Aorta (tissue), 5 donors: ENCODE measurements at regions of chr15 and their contacts with region 1.

Region 1: GRCh38 chr15:76139368-76140073 is 79.7 kb downstream of the TMEM266 start:
- DNase-seq: peak; percentile 80 to 83
- ATAC-seq: peak; percentile 81
- H3K4me3 ChIP-seq: no peak overlapping the region
- H3K27ac ChIP-seq: no peak overlapping the region
- H3K4me1 ChIP-seq: no peaks in the 10 kb centered on the region
- H3K27me3 ChIP-seq: no peaks in the 10 kb centered on the region

Region 2: DNA sequence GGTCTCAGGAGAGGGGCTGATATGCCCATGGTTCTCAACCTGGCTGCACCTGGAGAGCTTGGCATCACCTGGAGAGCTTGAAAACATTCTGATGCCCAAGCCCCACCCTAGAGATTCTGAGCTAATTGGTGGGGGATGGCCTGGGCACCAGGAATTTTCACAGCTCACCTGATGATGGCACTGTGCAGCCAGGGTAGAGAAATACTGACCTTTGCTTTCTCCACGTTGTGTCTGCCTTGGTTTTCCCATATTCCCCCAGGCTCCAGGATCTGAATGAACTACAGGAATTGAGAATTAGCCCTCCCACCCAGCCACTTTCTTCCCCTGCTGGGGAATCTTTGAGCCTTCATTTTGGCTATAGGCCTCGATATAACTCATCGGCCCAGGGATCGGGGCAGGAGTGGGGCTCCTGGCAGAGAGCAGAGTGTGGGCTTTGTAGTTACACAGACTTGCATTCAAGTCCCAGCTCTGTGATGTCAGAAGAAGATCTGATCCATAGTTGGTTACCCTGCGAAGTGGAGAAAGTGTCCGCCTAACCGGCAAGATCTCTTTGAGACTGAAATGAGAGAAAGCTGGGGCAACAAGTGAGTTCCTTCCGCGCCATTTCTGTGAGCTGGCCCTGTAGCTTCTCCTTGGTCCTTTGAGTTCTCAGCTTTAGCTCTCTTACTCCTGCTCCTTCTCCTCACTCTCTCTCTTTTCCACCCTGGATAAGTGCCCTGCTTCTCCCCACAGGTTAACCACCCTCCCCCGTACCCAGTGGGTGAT is 329.4 kb before region 1 on chr15:
- intact Hi-C with region 1: loop called in 1 of 2 experiments (anchors 10 kb)
- DNase-seq: no peak
- ATAC-seq: no peak
- H3K4me3 ChIP-seq: no peak overlapping the region
- H3K27ac ChIP-seq: no peak overlapping the region
- H3K4me1 ChIP-seq: no peaks in the 10 kb centered on the region
- H3K27me3 ChIP-seq: no peaks in the 10 kb centered on the region

Region 3: DNA sequence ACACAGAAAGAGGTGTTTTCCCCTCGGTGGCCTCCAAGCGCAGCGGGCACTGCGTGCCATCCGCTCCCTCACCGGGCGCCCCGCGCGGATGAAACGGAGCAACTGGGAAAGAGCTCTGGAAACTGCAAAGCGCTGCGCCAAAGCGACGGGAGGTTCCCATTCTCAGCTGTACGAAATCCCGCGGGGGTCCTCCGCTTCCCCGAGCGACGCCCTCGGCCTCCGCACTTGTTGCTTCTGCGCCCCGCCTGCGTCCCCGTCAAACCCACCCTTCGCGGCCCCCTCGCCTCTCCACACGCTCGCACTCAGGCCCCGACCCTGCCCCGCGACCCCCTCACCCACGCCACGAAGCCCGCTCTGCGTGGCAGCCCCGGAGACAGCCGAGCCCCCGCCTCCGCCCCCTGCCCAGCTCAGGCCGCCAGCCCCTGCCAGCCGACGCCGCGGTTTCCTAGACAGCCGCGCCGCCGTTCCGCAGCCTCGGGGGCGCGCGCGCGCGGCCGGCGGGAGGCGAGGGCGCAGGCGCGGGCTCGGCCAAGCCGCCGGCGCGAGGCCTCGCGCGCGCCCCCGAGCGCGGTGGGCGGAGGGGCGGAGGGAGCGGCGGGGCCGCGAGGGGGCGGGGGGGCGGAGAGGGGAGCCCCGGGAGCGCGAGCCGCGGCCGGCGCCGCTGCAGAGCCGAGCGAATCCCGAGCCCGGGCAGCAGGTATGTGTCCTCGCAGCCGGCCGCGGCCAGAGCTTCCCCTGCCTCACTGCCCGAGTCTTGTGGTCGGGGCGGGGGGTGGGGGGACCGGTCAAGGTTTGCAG is 80.0 kb before region 1 on chr15 and contains the start of gene TMEM266:
- intact Hi-C with region 1: loop called (anchors 2 kb)
- DNase-seq: peak in 1 of 2 donors; percentile 77
- ATAC-seq: peak; percentile 33
- H3K4me3 ChIP-seq: peak within 1 kb of the TSS; percentile 62 to 70
- H3K27ac ChIP-seq: no peak within 1 kb of the TSS
- H3K4me1 ChIP-seq: no peaks in the 10 kb centered on the region
- H3K27me3 ChIP-seq: no peaks in the 10 kb centered on the region
- total RNA-seq, gene TMEM266: 0.26 TPM in 1 of 2 donors, not detected in the other

Region 4: DNA sequence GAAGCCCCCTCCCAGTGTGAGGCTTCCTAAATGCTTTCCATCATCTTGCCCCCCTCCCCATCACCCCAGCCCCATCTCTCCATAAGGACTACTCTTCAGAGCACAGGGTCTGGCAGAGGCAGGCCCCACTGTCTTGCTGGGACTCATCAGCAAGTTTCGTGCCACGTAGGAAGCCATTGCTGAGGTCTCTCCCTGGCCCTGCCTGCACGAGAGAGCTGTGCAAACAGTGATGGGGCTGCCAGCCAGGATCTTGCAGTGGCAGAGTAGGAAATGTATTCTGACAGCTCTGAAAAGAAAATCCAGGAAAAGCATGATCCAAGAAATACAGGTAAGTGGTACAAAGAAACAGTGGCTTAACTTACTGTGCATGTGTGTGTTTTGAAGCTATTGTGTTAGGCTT is 219.6 kb after region 1 on chr15:
- intact Hi-C with region 1: no loop called
- DNase-seq: no peak
- ATAC-seq: no peak
- H3K4me3 ChIP-seq: no peak overlapping the region
- H3K27ac ChIP-seq: no peak overlapping the region
- H3K4me1 ChIP-seq: no peaks in the 10 kb centered on the region
- H3K27me3 ChIP-seq: no peaks in the 10 kb centered on the region